ENCODE measurements at regions of chr1 and their contacts with region 1.

Region 1: GRCh38 chr1:159891275-159892157 is 8.4 kb downstream of the CFAP45 start:
- DNase-seq: peak; percentile 81
- H3K4me3 ChIP-seq: no peak overlapping the region
- H3K27ac ChIP-seq: no peak overlapping the region
- H3K27me3 ChIP-seq: no peaks in the 10 kb centered on the region
- CTCF ChIP-seq: peak; percentile 97

Region 2: DNA sequence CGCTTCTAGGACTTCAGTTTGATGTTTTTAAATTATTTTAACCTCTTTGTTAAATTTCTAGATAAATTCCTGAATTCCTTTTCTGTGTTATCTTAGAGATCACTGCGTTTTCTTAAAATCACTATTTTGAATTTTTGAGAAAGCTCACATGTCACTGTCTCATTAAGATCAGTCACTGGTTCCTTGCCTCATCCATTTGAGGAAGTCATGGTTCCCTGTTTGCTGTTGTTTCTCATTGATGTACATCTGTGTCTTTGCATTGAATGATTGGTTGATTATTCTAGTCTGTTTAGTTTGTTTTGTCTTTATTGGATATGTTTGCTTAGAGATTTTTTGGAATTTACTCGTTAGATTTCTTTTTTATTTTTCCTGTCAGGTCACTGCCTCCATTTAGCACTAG is 227.3 kb before region 1 on chr1:
- CTCF ChIA-PET with region 1: no interaction called
- POLR2A ChIA-PET with region 1: interaction called, 11 read pairs
- DNase-seq: no peak
- H3K4me3 ChIP-seq: no peak overlapping the region
- H3K27ac ChIP-seq: no peak overlapping the region
- H3K27me3 ChIP-seq: no peaks in the 10 kb centered on the region
- CTCF ChIP-seq: no peak

Region 3: GRCh38 chr1:159752135-159752580 is 139.4 kb before region 1 on chr1:
- CTCF ChIA-PET with region 1: no interaction called
- POLR2A ChIA-PET with region 1: no interaction called
- DNase-seq: no peak
- H3K4me3 ChIP-seq: no peak overlapping the region
- H3K27ac ChIP-seq: no peak overlapping the region
- H3K27me3 ChIP-seq: no peaks in the 10 kb centered on the region
- CTCF ChIP-seq: no peak

Region 4: DNA sequence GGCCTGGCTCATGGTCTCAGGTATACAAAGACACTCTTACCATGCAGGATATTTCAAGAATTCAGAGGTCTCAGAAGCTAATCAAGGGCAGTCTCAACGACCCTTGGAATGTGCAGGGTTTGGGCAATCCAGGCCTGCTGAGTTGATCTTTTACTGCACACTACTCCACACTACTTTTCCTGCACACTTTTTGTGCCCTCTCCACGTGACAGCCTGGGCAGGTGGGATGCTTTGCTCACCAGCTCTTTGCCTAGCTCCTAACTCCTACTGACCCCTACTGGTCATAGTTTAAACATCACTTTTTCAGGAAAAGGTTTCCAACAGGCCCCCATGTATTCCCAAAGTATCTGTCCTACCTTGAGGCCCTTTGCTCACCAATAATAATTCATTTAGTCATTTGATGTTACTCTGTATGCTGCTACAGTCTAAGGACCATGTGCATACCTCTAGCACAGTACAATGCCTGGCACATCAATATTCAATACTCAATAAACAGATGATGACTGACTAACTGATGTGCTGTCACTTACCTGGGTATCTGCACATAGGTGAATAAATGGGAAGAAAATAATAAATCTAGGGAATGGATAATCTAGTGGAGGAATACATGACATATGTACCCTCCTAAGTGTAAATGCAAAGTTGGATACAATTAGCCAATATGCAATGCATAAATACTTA is 101.1 kb before region 1 on chr1:
- CTCF ChIA-PET with region 1: interaction called, 556 read pairs
- POLR2A ChIA-PET with region 1: no interaction called
- DNase-seq: no peak
- H3K4me3 ChIP-seq: no peak overlapping the region
- H3K27ac ChIP-seq: no peak overlapping the region
- H3K27me3 ChIP-seq: peaks cover 22% of the 10 kb centered on the region
- CTCF ChIP-seq: peak; percentile 58

Region 5: DNA sequence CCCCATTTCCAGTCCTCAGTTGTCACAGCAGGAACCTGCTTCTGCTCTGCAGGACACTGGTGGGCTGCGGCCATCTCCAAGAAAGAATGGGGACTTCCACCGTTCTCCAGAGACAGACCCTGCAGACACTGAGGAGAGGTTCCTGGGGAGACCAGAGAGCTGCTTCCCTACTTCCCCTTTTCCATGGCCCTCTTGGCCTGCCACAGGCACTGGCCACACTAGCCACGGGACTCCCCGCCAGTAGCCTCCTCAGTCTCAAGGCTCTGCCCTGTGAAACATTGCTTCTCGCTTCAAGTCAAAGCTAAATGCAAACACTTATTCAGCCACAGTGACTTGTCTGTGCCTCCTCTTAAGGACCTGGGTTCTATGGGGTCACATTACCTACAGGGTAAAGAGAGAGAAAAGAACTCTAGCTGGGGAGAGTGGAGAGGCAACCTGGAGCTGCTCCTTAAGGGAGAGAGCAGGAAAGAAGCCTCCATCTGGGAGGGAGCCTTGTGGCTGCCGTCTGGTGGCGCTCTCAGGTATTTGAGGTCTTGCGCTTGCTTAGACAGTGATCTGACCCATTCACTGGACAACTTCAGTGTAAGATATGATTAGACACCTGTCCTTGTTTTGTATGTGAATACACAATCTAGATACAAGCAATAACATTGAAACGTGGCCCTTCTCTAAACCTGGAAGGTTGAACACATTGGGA is 70.2 kb before region 1 on chr1:
- CTCF ChIA-PET with region 1: interaction called, 14 read pairs
- POLR2A ChIA-PET with region 1: no interaction called
- DNase-seq: peak; percentile 7
- H3K4me3 ChIP-seq: no peak overlapping the region
- H3K27ac ChIP-seq: no peak overlapping the region
- H3K27me3 ChIP-seq: peaks cover 11% of the 10 kb centered on the region
- CTCF ChIP-seq: peak; percentile 71

Region 6: DNA sequence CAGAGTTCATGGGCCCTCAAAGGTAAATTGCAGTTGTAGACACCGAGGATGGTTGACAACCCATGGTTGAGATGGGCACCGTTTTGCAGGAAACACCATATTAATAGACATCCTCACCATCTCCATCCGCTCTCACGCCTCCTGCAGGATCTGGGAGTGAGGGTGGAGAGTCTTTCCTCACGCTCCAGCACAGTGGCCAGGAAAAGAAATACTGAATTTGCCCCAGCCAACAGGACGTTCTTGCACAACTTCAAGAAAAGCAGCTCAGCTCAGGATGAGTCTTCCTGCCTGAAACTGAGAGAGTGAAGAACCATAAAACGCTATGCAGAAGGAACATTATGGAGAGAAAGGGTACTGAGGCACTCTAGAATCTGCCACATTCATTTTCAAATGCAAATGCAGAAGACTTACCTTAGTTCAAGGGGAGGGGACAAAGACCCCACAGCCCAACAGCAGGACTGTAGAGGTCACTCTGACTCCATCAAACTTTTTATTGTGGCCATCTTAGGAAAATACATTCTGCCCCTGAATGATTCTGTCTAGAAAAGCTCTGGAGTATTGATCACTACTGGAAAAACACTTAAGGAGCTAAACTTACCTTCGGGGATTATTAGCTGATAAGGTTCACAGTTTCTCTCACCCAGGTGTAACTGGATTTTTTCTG is 55.5 kb before region 1 on chr1:
- CTCF ChIA-PET with region 1: interaction called, 31 read pairs
- POLR2A ChIA-PET with region 1: no interaction called
- DNase-seq: no peak
- H3K4me3 ChIP-seq: no peak overlapping the region
- H3K27ac ChIP-seq: no peak overlapping the region
- H3K27me3 ChIP-seq: no peaks in the 10 kb centered on the region
- CTCF ChIP-seq: 0 out of 2 replicates have a peak, but pooled peaks have one; percentile 21

Region 7: GRCh38 chr1:159869173-159869572 is 22.3 kb before region 1 on chr1:
- CTCF ChIA-PET with region 1: interaction called, 28 read pairs
- POLR2A ChIA-PET with region 1: no interaction called
- DNase-seq: no peak
- H3K4me3 ChIP-seq: no peak overlapping the region
- H3K27ac ChIP-seq: peak overlapping the region; percentile 47
- H3K27me3 ChIP-seq: no peaks in the 10 kb centered on the region
- CTCF ChIP-seq: no peak

Region 8: DNA sequence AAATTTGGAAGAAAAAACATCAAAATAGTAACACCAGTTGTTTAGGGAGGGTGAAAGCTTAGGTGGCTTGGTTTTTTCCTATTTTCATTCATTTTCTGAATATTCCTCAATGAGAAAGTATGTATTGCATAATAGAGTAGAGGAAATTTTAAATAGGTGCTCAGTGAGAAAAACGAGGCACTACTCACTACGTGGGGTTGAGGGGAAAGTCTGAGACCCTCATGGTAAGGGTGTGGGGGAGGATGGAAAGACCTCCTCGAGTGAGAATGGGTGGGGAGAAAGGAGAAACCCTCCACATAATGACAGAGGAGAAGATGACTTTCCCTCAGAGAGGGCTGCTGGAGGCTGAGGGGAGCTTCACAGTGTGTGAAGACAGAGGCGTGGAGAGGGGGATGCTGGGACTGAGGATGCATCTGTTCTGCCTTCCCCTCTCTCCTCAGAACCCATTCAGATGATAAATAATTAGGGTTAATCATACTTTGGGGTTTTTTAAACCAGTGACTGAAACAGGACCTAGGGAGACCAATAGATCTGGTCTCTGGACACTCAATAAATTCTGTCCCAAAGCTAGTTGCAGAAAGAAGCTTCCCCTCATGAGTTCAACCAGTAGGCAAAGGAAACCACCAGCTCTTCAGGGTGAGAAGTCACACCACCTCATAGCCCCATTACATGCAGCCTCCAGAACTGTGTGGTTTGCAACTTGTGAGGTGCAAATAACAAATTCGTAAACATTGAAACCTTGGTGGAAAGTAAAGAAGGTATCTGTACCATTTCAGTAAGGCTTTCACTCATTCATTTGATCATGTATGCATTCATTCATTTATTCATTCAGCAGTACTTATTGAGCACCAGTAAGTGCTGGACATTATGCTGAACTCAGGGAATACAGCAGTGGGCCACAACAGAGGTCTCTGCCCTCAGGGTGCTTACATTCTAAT is 864.7 kb after region 1 on chr1:
- CTCF ChIA-PET with region 1: no interaction called
- POLR2A ChIA-PET with region 1: no interaction called
- DNase-seq: no peak
- H3K4me3 ChIP-seq: no peak overlapping the region
- H3K27ac ChIP-seq: no peak overlapping the region
- H3K27me3 ChIP-seq: no peaks in the 10 kb centered on the region
- CTCF ChIP-seq: no peak